Cardiac septum (tissue), 1 donor: ENCODE measurements at regions of chr22 and their contacts with region 1.

Region 1: DNA sequence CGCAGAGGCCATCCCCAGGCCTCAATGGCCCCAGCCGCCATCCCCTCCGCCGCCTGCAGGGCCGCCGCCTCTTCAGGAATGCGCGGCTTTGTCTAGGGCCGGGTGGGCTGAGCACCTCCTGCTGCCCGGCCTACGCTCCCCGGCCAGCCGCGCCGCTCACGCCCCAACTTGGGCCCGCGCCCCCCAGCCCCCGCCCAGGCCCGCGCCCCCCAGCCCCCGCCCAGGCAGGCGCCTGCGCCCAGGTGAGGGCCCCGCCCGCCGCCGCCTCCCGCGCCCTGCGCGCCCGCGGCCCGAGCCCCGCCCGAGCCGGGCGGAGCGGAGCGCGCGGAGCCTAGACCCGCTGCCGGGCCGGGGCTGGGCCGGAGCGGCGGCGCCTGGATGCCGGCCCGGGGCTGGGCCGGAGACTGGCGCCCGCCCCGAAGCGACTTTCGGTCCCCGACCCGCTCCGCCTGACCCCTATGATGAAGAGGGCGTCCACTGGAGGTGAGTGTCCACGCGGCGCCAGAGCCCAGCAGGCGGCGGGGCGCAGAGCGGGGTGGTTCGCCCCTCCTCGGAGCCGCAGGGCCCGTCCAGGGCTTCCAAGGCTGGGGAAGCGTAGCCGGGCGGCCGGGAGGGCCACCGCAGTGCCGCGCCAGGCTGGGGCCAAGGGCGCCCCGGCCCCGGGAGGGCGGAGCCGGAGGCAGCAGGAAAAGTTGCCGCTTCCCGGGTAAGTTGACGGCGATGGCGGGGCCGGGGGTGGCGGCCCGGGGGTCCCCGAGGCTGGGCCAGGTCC is 34.3 kb upstream of the PRODH start:
- DNase-seq: no peak

Region 2: GRCh38 chr22:19066531-19067271 is 96.3 kb after region 1 on chr22:
- intact Hi-C with region 1: loop called (anchors 10 kb)
- DNase-seq: peak; percentile 67

Region 3: DNA sequence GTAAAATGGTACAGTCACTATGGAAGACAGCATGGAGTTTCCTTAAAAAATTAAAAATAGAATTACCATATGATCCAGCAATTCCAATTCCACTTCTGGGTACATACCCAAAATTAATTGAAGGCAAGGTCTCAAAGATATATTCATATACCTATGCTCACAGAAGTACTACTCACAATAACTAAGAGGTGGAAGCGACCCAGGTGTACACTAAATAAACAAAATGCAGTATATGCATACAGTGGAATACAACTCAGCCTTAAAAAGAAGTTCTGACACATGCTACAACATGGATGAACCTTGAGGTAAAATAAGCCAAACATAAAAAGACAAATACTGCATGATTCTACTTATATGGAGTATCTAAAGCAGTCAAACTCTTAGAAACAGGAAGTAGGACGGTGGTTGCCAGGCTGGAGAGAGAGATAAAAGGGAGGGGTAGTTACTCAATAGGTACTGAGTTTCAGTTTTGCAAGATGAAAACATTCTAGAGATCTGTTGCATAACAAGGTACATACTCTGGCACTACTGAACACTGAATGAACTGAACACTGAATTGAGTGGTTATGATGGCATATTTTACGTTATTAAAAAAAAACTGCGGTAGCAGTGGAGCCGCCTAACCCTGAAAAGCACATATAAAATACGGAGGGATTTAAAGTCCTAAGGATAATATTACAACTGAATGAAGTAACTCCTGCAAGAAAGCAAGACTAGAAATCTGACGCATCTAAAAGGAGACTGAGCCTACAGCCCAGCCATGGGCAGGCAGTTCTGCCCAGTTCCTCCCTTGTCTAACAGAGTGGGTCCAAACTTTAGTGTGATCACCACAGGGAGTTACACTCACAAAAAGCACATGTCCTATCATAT is 139.1 kb after region 1 on chr22:
- intact Hi-C with region 1: no loop called
- DNase-seq: peak; percentile 76

Region 4: DNA sequence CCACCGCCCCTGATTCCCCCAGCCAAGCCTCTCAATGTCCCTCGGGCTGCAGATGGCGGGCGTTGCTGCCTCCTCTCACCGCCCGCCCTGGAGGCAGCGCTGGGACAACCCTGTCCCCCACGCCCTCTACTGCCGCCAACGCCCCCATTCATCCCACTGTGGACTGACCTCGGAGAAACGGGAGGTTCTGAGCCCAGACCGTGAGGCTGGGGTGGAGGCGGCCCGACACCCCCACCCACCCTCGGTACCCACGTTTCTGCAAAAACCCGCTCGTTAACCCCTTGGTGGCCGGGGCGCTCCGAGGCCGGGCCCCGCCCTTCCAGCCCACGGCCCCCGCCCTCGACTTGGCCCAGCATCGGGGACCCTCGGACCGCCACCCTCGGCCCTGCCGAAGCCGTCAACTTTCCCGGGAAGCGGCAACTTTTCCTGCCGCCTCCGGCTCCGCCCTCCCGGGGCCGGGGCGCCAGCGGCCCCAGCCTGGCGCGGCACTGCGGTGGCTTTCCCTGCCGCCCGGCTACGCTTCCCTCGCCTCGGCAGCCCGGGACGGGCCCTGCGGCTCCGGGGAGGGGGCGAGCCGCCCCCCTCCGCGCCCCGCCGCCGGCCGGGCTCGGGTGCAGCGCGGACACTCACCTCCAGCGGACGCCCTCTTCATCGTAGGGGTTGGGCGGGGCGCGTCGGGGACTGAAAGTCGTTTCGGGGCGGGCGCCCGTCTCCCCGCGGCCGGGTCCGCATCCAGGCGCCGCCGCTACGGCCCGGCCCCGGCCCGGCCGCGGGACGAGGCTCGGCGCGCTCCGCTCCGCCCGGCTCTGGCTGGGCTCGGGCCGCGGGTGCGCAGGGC is 1297.3 kb after region 1 on chr22:
- intact Hi-C with region 1: loop called (anchors 5 kb)
- DNase-seq: no peak